Sigmoid colon (tissue), 7 donors: ENCODE measurements at regions of chr19 and their contacts with region 1.

Region 1: GRCh38 chr19:16829010-16829821 is at the start of gene SIN3B:
- DNase-seq: peak; percentile 92
- H3K4me3 ChIP-seq: peak within 1 kb of the TSS; percentile 88 to 100 (median 92)
- H3K27ac ChIP-seq: peak within 1 kb of the TSS; percentile 80 to 89 (median 86)
- H3K4me1 ChIP-seq: peaks cover 0 to 31% (median 28%) of the 10 kb centered on the region in 4 donors
- H3K27me3 ChIP-seq: no peaks in the 10 kb centered on the region
- CTCF ChIP-seq: no peak
- EP300 ChIP-seq: no peak
- POLR2A ChIP-seq: no peak
- total RNA-seq, gene SIN3B: 23.9 to 67.3 (median 33.5) TPM

Region 2: GRCh38 chr19:16659831-16660708 is 169.1 kb before region 1 on chr19 and contains the start of gene SMIM7:
- intact Hi-C with region 1: loop called (anchors 5 kb)
- DNase-seq: peak; percentile 99
- H3K4me3 ChIP-seq: peak within 1 kb of the TSS; percentile 70 to 84 (median 80)
- H3K27ac ChIP-seq: peak within 1 kb of the TSS; percentile 91 to 94 (median 94)
- H3K4me1 ChIP-seq: peaks cover 0 to 42% (median 33%) of the 10 kb centered on the region in 4 donors
- H3K27me3 ChIP-seq: no peaks in the 10 kb centered on the region
- CTCF ChIP-seq: no peak
- EP300 ChIP-seq: peak in 1 of 4 donors; percentile 39
- POLR2A ChIP-seq: peak; percentile 89 to 95
- total RNA-seq, gene SMIM7: 65.2 to 110 (median 86.2) TPM

Region 3: GRCh38 chr19:16714702-16715287 is 114.4 kb before region 1 on chr19:
- intact Hi-C with region 1: loop called (anchors 5 kb)
- DNase-seq: no peak
- H3K4me3 ChIP-seq: no peak overlapping the region
- H3K27ac ChIP-seq: no peak overlapping the region
- H3K4me1 ChIP-seq: peaks cover 0 to 4% (median 0%) of the 10 kb centered on the region in 4 donors
- H3K27me3 ChIP-seq: no peaks in the 10 kb centered on the region
- CTCF ChIP-seq: peak; percentile 35 to 69 (median 65)
- EP300 ChIP-seq: no peak
- POLR2A ChIP-seq: no peak

Region 4: DNA sequence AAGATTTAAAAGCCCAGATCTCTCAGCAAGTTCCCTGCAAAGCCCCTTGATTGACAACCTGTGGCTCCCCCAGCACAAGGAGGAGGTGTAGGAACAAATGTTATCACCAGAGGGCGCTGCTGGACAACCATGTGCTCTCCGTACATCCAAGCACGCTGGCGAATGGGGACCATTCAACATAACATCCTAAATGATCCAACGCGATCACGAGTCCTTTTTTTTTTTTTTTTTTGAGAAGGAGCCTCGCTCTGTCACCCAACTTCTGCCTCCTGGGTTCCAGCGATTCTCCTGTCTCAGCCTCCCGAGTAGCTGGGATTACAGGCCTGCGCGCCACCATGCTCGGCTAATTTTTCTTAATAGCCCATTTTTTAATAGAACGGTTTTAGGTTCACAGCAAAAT is 57.6 kb before region 1 on chr19:
- intact Hi-C with region 1: loop called (anchors 2 kb)
- DNase-seq: peak; percentile 88
- H3K4me3 ChIP-seq: no peak overlapping the region
- H3K27ac ChIP-seq: no peak overlapping the region
- H3K4me1 ChIP-seq: no peaks in the 10 kb centered on the region
- H3K27me3 ChIP-seq: peaks cover 0 to 8% (median 0%) of the 10 kb centered on the region in 3 donors
- CTCF ChIP-seq: peak; percentile 68 to 81 (median 74)
- EP300 ChIP-seq: no peak
- POLR2A ChIP-seq: no peak

Region 5: GRCh38 chr19:16888629-16889365 is 59.6 kb after region 1 on chr19 and contains the start of gene F2RL3:
- intact Hi-C with region 1: no loop called
- DNase-seq: peak; percentile 81
- H3K4me3 ChIP-seq: peak within 1 kb of the TSS in 1 of 4 donors; percentile 19
- H3K27ac ChIP-seq: peak within 1 kb of the TSS in 3 of 4 donors; percentile 12 to 41 (median 26)
- H3K4me1 ChIP-seq: peaks cover 0 to 8% (median 4%) of the 10 kb centered on the region in 4 donors
- H3K27me3 ChIP-seq: peaks cover 0 to 33% (median 8%) of the 10 kb centered on the region in 3 donors
- CTCF ChIP-seq: no peak
- EP300 ChIP-seq: peak in 1 of 4 donors; percentile 52
- POLR2A ChIP-seq: no peak
- total RNA-seq, gene F2RL3: 1.8 to 3.9 (median 1.9) TPM